ENCODE measurements at regions of chr11 and their contacts with region 1.

Region 1: DNA sequence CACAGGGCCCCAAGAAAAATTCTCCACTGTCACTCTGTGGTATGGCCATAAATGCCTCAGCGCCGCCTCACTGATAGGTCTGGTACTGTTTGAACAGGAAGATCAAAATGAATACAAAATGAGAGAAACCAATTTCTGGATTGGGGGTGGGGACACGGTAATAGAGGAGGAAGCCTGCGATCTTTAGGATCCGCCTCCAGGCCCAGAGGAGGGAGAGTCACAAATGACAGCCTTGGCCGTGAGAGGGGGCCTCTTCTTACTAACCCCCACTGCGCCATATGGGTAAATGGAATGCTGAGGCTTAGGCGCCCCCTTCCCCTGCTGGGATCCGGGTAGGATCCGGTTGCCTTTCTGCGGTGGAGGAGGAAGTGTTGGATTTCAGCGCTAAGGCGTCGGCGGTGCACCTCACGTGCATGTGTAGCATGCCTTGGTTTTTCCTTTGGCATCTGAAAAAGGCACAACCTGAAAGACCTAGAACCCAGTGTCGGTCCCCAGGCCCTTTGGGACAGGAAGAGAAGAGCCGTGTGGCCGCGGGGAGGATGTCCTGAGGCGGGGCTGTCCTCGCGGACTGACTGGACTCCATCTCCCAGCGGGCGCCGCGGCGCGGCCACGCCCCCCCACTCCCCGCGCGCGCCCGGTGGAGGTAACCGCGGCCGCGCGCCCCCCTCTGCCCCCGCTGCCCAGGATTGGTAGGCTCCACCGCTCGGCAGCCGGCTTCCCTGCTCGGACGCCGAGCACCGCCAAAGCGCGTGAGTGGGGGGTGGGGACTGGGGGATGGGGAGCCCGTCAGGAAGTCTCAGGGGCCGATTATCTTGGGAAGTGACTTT is 718 bp upstream of the MADD start:
- DNase-seq: peak; percentile 73 to 93 (median 85)
- ATAC-seq: peak; percentile 57
- H3K4me3 ChIP-seq: peak overlapping the region; percentile 71
- H3K4me3 Mint-ChIP-seq: peak overlapping the region; percentile 88
- H3K27ac ChIP-seq: peak overlapping the region; percentile 72 to 92
- H3K27ac Mint-ChIP-seq: peak overlapping the region; percentile 94
- H3K4me1 ChIP-seq: peaks cover 43% of the 10 kb centered on the region
- H3K4me1 Mint-ChIP-seq: peaks cover 53% of the 10 kb centered on the region
- H3K27me3 ChIP-seq: no peaks in the 10 kb centered on the region
- H3K27me3 Mint-ChIP-seq: no peaks in the 10 kb centered on the region
- CTCF ChIP-seq: peak; percentile 4

Region 2: DNA sequence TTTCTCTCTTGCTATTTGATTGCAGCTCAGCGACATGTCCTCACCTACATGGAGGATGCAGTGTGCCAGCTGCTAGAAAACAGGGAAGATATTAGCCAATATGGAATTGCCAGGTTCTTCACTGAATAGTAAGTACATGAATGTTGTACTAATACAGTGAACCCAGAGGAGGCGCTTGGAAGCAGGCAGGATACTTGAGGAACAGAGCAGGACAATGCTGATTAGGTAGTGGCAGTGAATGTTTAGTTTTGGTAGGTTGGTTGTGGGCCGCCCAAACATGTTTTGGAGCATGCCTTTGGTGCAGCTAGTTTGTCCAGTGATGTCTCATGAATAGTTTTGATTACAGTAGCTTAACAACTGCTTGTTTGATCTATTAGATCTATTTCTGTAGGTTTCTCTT is 282.0 kb before region 1 on chr11:
- CTCF ChIA-PET with region 1: no interaction called
- POLR2A ChIA-PET with region 1: no interaction called
- intact Hi-C with region 1: no loop called
- DNase-seq: no peak
- ATAC-seq: no peak
- H3K4me3 ChIP-seq: no peak overlapping the region
- H3K4me3 Mint-ChIP-seq: no peak overlapping the region
- H3K27ac ChIP-seq: no peak overlapping the region
- H3K27ac Mint-ChIP-seq: no peak overlapping the region
- H3K4me1 ChIP-seq: no peaks in the 10 kb centered on the region
- H3K4me1 Mint-ChIP-seq: no peaks in the 10 kb centered on the region
- H3K27me3 ChIP-seq: no peaks in the 10 kb centered on the region
- H3K27me3 Mint-ChIP-seq: no peaks in the 10 kb centered on the region
- CTCF ChIP-seq: no peak

Region 3: DNA sequence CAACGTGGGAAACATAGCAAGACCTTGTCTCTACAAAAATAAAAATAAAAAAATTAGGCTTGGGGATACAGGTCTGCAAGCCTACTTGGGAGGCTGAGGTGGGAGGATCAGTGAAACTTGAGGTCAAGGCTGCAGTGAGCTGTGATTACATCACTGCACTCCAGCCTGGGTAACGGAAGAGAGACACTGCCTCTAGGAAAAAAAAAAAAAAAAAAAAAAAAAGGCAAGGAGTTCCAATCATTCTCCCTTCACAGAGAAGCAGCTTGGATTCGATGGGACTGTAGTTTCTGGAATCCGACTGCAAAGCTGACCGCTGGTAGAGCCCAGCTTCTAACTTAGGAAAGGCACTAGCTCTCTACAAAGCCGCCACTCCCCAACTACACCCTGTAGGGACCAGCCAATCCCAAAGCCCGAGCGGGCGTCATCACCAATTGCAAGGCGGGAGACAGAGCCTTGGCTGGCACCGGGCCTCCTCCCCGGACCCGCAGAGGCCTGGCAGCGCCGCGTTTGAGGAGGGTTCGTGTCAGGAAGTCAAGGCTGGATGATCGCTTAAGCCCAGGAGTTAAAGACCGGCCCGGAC is 55.1 kb before region 1 on chr11:
- CTCF ChIA-PET with region 1: interaction called, 3 read pairs
- POLR2A ChIA-PET with region 1: interaction called, 5 read pairs
- intact Hi-C with region 1: loop called (anchors 1 kb)
- DNase-seq: peak; percentile 64 to 90 (median 84)
- ATAC-seq: peak; percentile 67
- H3K4me3 ChIP-seq: peak overlapping the region; percentile 65 to 95
- H3K4me3 Mint-ChIP-seq: peak overlapping the region; percentile 96
- H3K27ac ChIP-seq: peak overlapping the region; percentile 85 to 93
- H3K27ac Mint-ChIP-seq: peak overlapping the region; percentile 97
- H3K4me1 ChIP-seq: peaks cover 16% of the 10 kb centered on the region
- H3K4me1 Mint-ChIP-seq: peaks cover 31% of the 10 kb centered on the region
- H3K27me3 ChIP-seq: no peaks in the 10 kb centered on the region
- H3K27me3 Mint-ChIP-seq: no peaks in the 10 kb centered on the region
- CTCF ChIP-seq: no peak

Region 4: GRCh38 chr11:47248664-47249377 is 20.4 kb before region 1 on chr11 and contains the start of gene ACP2:
- CTCF ChIA-PET with region 1: interaction called, 12 read pairs
- POLR2A ChIA-PET with region 1: interaction called, 18 read pairs
- intact Hi-C with region 1: loop called (anchors 1 kb)
- DNase-seq: peak; percentile 70 to 93 (median 85)
- ATAC-seq: peak; percentile 97
- H3K4me3 ChIP-seq: peak within 1 kb of the TSS; percentile 81 to 90
- H3K4me3 Mint-ChIP-seq: peak within 1 kb of the TSS; percentile 100
- H3K27ac ChIP-seq: peak within 1 kb of the TSS; percentile 63 to 83
- H3K27ac Mint-ChIP-seq: peak within 1 kb of the TSS; percentile 100
- H3K4me1 ChIP-seq: peaks cover 17% of the 10 kb centered on the region
- H3K4me1 Mint-ChIP-seq: peaks cover 32% of the 10 kb centered on the region
- H3K27me3 ChIP-seq: no peaks in the 10 kb centered on the region
- H3K27me3 Mint-ChIP-seq: no peaks in the 10 kb centered on the region
- CTCF ChIP-seq: no peak
- total RNA-seq, gene ACP2: 18.3 to 22.6 TPM

Region 5: GRCh38 chr11:47308050-47308823 is 39.0 kb after region 1 on chr11:
- CTCF ChIA-PET with region 1: no interaction called
- POLR2A ChIA-PET with region 1: no interaction called
- intact Hi-C with region 1: no loop called
- DNase-seq: no peak
- ATAC-seq: no peak
- H3K4me3 ChIP-seq: no peak overlapping the region
- H3K4me3 Mint-ChIP-seq: no peak overlapping the region
- H3K27ac ChIP-seq: no peak overlapping the region
- H3K27ac Mint-ChIP-seq: no peak overlapping the region
- H3K4me1 ChIP-seq: no peaks in the 10 kb centered on the region
- H3K4me1 Mint-ChIP-seq: no peaks in the 10 kb centered on the region
- H3K27me3 ChIP-seq: no peaks in the 10 kb centered on the region
- H3K27me3 Mint-ChIP-seq: no peaks in the 10 kb centered on the region
- CTCF ChIP-seq: no peak

Region 6: GRCh38 chr11:47578524-47579460 is 309.6 kb after region 1 on chr11 and contains the starts of genes KBTBD4 and NDUFS3:
- CTCF ChIA-PET with region 1: no interaction called
- POLR2A ChIA-PET with region 1: no interaction called
- intact Hi-C with region 1: loop called (anchors 1 to 10 kb)
- DNase-seq: peak; percentile 74 to 95 (median 89)
- ATAC-seq: peak; percentile 94
- H3K4me3 ChIP-seq: peak within 1 kb of the TSS; percentile 90 to 92
- H3K4me3 Mint-ChIP-seq: peak within 1 kb of the TSS; percentile 99
- H3K27ac ChIP-seq: peak within 1 kb of the TSS; percentile 76 to 84
- H3K27ac Mint-ChIP-seq: peak within 1 kb of the TSS; percentile 97
- H3K4me1 ChIP-seq: peaks cover 31% of the 10 kb centered on the region
- H3K4me1 Mint-ChIP-seq: peaks cover 54% of the 10 kb centered on the region
- H3K27me3 ChIP-seq: no peaks in the 10 kb centered on the region
- H3K27me3 Mint-ChIP-seq: no peaks in the 10 kb centered on the region
- CTCF ChIP-seq: no peak
- total RNA-seq, gene KBTBD4: 31.8 to 32.6 TPM
- total RNA-seq, gene NDUFS3: 159 to 179 TPM

Region 7: DNA sequence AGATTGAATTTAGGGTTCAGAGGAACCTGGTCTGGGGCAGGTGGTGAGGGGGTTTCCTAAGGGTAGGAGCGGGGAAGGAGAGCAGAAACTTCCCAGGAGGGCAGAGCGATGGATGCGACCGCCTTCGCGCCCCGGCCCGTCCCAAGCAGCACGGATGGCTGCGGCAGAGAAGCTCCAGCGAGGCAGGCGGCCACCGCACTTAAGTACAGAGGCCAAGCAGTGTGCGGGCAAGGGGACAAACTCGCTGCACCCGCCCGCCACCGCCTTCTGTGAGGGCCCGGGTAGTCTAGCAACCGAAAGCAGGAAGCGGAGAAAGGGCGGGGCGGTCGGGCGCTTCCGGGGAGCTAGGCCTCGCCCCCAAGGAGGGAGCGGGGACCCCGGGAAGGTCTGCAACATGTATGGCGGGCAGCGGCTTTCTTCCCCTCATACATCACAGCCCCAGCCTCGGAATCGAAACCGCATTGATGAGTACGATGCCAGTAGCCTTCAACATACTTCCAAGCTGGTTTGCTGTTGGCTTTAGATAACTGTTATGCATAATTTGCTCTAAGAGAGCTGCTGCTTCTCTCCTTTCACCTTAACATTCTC is 446.0 kb after region 1 on chr11 and contains the start of gene AGBL2:
- CTCF ChIA-PET with region 1: no interaction called
- POLR2A ChIA-PET with region 1: no interaction called
- intact Hi-C with region 1: no loop called
- DNase-seq: peak; percentile 70 to 91 (median 86)
- ATAC-seq: peak; percentile 99
- H3K4me3 ChIP-seq: peak within 1 kb of the TSS; percentile 66 to 88
- H3K4me3 Mint-ChIP-seq: peak within 1 kb of the TSS; percentile 96
- H3K27ac ChIP-seq: peak within 1 kb of the TSS; percentile 81 to 88
- H3K27ac Mint-ChIP-seq: peak within 1 kb of the TSS; percentile 94
- H3K4me1 ChIP-seq: peaks cover 14% of the 10 kb centered on the region
- H3K4me1 Mint-ChIP-seq: peaks cover 21% of the 10 kb centered on the region
- H3K27me3 ChIP-seq: no peaks in the 10 kb centered on the region
- H3K27me3 Mint-ChIP-seq: no peaks in the 10 kb centered on the region
- CTCF ChIP-seq: no peak
- total RNA-seq, gene AGBL2: 3.6 to 5.0 TPM

Region 8: GRCh38 chr11:47766305-47767227 is 497.4 kb after region 1 on chr11:
- CTCF ChIA-PET with region 1: no interaction called
- POLR2A ChIA-PET with region 1: no interaction called
- intact Hi-C with region 1: loop called (anchors 2 to 5 kb)
- DNase-seq: peak; percentile 48 to 90 (median 74)
- ATAC-seq: peak; percentile 33
- H3K4me3 ChIP-seq: peak overlapping the region; percentile 75 to 79
- H3K4me3 Mint-ChIP-seq: peak overlapping the region; percentile 94
- H3K27ac ChIP-seq: peak overlapping the region; percentile 91 to 97
- H3K27ac Mint-ChIP-seq: peak overlapping the region; percentile 100
- H3K4me1 ChIP-seq: peaks cover 29% of the 10 kb centered on the region
- H3K4me1 Mint-ChIP-seq: peaks cover 31% of the 10 kb centered on the region
- H3K27me3 ChIP-seq: no peaks in the 10 kb centered on the region
- H3K27me3 Mint-ChIP-seq: no peaks in the 10 kb centered on the region
- CTCF ChIP-seq: no peak

Region 9: DNA sequence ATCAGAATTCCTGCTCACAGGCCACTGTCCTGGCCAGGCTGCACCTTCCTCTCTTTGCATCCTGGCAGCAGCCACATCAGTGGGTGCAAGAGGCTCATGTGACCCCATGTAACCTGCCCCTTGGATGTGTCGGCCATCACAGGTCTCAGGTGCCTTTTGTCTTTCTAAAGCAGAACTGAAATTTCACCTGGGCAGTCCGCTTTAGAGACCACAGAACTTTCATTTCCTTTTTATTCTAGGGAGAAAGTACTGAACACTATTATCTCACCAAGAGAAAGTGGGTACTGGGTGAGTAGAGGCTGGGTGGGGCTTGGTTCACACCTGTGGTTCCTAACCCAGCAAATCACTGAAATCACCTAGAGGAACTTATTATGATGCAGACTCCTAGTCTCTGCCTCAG is 630.6 kb after region 1 on chr11:
- CTCF ChIA-PET with region 1: no interaction called
- POLR2A ChIA-PET with region 1: no interaction called
- intact Hi-C with region 1: no loop called
- DNase-seq: peak in 1 of 9 experiments; percentile 21
- ATAC-seq: peak; percentile 26
- H3K4me3 ChIP-seq: no peak overlapping the region
- H3K4me3 Mint-ChIP-seq: no peak overlapping the region
- H3K27ac ChIP-seq: no peak overlapping the region
- H3K27ac Mint-ChIP-seq: no peak overlapping the region
- H3K4me1 ChIP-seq: no peaks in the 10 kb centered on the region
- H3K4me1 Mint-ChIP-seq: peaks cover 8% of the 10 kb centered on the region
- H3K27me3 ChIP-seq: no peaks in the 10 kb centered on the region
- H3K27me3 Mint-ChIP-seq: no peaks in the 10 kb centered on the region
- CTCF ChIP-seq: no peak

Measured in CD8-positive, alpha-beta T cell (primary cell).